Calu3 (cell line): ENCODE measurements at regions of chr6 and their contacts with region 1.

Region 1: GRCh38 chr6:6686748-6687601 is 98.5 kb downstream of the LY86 start:
- DNase-seq: peak; percentile 97
- H3K4me3 Mint-ChIP-seq: peak overlapping the region; percentile 73
- H3K27ac Mint-ChIP-seq: peak overlapping the region; percentile 75
- H3K4me1 Mint-ChIP-seq: peaks cover 28% of the 10 kb centered on the region
- H3K27me3 Mint-ChIP-seq: no peaks in the 10 kb centered on the region
- CTCF ChIP-seq: no peak

Region 2: GRCh38 chr6:7846966-7847818 is 1160.2 kb after region 1 on chr6:
- CTCF ChIA-PET with region 1: interaction called, 10 read pairs
- intact Hi-C with region 1: no loop called
- DNase-seq: no peak
- H3K4me3 Mint-ChIP-seq: no peak overlapping the region
- H3K27ac Mint-ChIP-seq: no peak overlapping the region
- H3K4me1 Mint-ChIP-seq: no peaks in the 10 kb centered on the region
- H3K27me3 Mint-ChIP-seq: no peaks in the 10 kb centered on the region
- CTCF ChIP-seq: no peak